A673 (cell line): ENCODE measurements at regions of chr3 and their contacts with region 1.

Region 1: GRCh38 chr3:181326637-181327223 is 337.2 kb upstream of the DNAJC19 start:
- DNase-seq: peak; percentile 55
- H3K4me3 ChIP-seq: no peak overlapping the region
- H3K27ac ChIP-seq: no peak overlapping the region
- H3K4me1 ChIP-seq: no peaks in the 10 kb centered on the region
- H3K27me3 ChIP-seq: peaks cover 14% of the 10 kb centered on the region
- CTCF ChIP-seq: peak; percentile 80

Region 2: GRCh38 chr3:181700168-181701087 is 373.7 kb after region 1 on chr3:
- CTCF ChIA-PET with region 1: interaction called, 8 read pairs
- POLR2A ChIA-PET with region 1: no interaction called
- intact Hi-C with region 1: loop called (anchors 1 kb)
- DNase-seq: peak; percentile 85
- H3K4me3 ChIP-seq: peak overlapping the region; percentile 35
- H3K27ac ChIP-seq: no peak overlapping the region
- H3K4me1 ChIP-seq: peaks cover 8% of the 10 kb centered on the region
- H3K27me3 ChIP-seq: peaks cover 46% of the 10 kb centered on the region
- CTCF ChIP-seq: peak; percentile 87

Region 3: GRCh38 chr3:182618085-182618732 is 1291.5 kb after region 1 on chr3:
- CTCF ChIA-PET with region 1: no interaction called
- POLR2A ChIA-PET with region 1: no interaction called
- intact Hi-C with region 1: loop called (anchors 5 kb)
- DNase-seq: peak; percentile 66
- H3K4me3 ChIP-seq: no peak overlapping the region
- H3K27ac ChIP-seq: no peak overlapping the region
- H3K4me1 ChIP-seq: no peaks in the 10 kb centered on the region
- H3K27me3 ChIP-seq: no peaks in the 10 kb centered on the region
- CTCF ChIP-seq: peak; percentile 71

Region 4: DNA sequence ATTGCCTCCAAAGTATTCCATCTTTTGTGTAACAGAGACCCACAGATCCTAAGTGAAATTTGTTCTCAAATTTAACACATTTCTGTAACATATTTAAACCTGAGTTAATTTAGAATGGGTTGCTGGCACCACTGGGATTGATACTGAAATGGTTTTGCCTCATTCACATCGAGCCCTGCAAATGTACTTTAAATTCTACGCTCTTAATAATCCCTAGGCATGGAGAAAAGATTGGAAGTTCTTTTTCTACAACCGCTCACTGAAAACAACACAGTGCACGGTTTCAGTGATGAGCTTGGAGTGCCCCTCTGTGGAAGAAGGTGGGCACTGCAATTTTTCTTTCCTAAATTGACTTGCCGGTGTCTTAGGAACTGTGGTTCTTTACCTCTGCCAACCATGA is 1356.7 kb after region 1 on chr3:
- CTCF ChIA-PET with region 1: no interaction called
- POLR2A ChIA-PET with region 1: no interaction called
- intact Hi-C with region 1: loop called (anchors 5 kb)
- DNase-seq: peak; percentile 84
- H3K4me3 ChIP-seq: peak overlapping the region; percentile 61
- H3K27ac ChIP-seq: no peak overlapping the region
- H3K4me1 ChIP-seq: peaks cover 12% of the 10 kb centered on the region
- H3K27me3 ChIP-seq: peaks cover 28% of the 10 kb centered on the region
- CTCF ChIP-seq: peak; percentile 96